ENCODE measurements at regions of chr11 and their contacts with region 1.

Region 1: DNA sequence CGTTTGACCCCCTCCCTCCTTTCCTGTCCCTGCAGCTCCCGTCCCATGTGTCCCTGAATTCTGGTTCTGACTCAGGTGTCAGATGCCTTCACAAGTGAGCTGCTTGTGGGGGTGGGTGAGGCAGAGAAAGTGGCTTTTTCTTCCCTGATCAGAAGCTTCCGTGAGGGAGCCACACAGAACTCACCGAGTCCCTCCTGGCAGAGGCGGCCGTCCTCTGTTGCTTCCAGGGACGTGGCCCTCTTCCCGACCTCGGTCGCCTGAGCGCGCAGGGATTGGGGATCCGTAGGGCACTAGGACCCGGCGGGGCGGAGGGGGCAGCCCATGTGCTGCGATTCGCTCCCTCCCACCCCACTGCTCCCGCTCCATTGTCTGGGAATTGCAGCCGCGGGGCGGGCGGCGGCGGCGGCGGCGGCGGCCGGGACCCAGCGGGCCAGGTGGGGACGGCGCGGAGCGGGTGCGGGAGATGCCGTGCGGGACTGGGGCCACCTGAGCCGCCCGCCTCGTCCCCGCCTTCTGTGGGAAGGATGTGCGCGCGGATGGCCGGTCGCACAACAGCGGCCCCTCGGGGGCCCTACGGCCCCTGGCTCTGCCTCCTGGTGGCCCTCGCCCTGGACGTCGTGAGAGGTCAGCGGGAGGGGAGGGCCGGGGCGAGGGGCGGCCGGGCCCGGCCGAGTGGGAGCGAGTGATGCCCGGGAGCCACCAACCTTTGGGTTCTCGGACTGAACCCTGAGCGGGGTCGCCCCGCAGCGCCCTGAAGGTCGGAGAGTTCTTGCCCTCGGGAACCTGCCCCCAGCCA is at the start of gene TMEM132A:
- DNase-seq: no peak
- H3K4me3 ChIP-seq: peak within 1 kb of the TSS; percentile 76
- CTCF ChIP-seq: no peak

Region 2: DNA sequence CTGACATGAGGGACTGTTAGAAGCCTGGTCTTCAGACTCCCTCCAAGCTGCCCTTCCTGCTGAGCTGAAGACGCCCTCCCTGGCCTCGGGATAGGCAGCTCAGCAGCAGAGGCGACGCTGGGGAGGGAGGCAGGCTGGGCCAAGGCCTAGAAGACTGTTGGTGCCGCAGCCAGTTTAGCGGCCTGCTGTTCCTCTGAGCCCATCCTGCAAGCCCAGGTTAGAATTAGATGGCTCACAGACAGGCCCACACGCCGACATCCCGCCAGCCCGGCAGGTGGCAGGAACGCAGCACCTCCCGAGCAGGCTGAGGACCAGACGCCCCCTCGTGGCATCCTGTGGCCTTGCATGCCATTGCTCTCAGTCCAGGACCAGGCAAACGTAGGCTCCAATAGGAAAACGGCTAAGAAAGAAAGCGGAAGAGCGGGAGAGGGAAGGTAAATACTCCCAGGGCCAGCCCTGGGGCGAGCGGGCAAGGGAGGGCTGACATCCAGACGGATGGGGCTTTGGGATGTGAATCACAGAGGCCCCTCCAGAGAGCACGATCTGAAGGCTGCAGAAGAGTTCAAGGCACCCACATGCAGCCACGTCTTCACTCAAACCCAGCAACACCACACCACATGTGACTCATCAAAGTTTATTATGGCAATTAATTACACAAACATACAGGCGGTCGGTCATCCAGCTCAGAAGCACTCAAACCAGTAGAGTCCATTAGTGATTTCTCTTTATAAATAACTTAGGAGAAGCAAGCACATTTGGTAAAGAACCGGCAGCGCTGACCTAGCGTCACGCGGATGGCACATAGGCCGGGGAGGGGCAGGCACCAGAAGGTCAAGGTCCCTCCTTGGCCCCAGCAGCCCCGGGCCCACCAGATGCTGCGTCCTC is 205.6 kb after region 1 on chr11:
- in situ Hi-C with region 1: loop called (anchors 5 kb)
- DNase-seq: peak; percentile 75
- H3K4me3 ChIP-seq: no peak overlapping the region
- CTCF ChIP-seq: peak; percentile 100

Measured in astrocyte of the cerebellum (primary cell).